ENCODE measurements at regions of chr20 and their contacts with region 1.

Region 1: GRCh38 chr20:48745326-48745725 is 82.5 kb downstream of the PREX1 start:
- DNase-seq: no peak
- H3K4me3 ChIP-seq: no peak overlapping the region
- H3K27ac ChIP-seq: peak overlapping the region in 55 of 59 donors; percentile 12 to 100 (median 82)
- H3K27me3 ChIP-seq: no peaks in the 10 kb centered on the region
- CTCF ChIP-seq: peak in 10 of 56 donors; percentile 16 to 42 (median 23)

Region 2: DNA sequence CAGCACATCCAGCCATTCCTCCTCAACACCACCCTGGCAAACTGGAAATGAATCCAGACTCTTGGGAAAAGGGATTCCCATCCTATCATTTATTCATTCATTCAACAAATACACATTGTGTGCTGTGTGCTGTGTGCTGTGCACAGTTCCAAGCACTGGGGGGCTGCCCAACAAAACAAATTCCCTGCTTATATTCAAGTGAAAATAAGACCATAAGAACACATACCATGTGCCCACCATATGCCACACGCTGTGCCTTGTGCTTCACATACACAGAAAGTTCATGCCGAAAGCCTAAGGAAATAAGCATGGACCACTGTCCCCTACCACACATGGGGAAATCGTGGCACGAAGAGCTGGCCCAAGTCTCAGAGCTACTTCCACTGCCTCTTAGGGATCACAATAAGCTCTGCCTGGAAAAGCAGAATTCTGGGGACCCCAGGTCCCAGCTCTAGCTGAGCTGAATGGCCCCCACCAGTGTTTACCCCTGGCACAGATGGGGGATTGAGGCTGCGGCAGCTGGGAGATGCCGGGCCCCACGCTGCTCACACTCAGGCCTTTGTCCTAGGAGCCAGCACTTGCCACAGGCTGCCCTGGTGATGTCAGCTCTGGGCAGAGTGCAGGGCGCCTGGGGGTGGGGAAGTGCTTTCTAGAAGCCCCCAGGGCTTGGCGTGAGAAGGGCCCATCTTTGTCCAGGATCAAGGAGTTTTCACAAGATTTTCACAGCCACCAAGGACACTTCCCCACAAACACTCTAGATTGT is 17.1 kb before region 1 on chr20:
- intact Hi-C with region 1: loop called in 1 of 2 experiments (anchors 2 kb)
- DNase-seq: peak; percentile 34 to 96 (median 94)
- H3K4me3 ChIP-seq: peak overlapping the region in 4 of 59 donors; percentile 3 to 26 (median 18)
- H3K27ac ChIP-seq: peak overlapping the region; percentile 80 to 100 (median 98)
- H3K27me3 ChIP-seq: no peaks in the 10 kb centered on the region
- CTCF ChIP-seq: peak in 12 of 56 donors; percentile 4 to 34 (median 12)

Region 3: DNA sequence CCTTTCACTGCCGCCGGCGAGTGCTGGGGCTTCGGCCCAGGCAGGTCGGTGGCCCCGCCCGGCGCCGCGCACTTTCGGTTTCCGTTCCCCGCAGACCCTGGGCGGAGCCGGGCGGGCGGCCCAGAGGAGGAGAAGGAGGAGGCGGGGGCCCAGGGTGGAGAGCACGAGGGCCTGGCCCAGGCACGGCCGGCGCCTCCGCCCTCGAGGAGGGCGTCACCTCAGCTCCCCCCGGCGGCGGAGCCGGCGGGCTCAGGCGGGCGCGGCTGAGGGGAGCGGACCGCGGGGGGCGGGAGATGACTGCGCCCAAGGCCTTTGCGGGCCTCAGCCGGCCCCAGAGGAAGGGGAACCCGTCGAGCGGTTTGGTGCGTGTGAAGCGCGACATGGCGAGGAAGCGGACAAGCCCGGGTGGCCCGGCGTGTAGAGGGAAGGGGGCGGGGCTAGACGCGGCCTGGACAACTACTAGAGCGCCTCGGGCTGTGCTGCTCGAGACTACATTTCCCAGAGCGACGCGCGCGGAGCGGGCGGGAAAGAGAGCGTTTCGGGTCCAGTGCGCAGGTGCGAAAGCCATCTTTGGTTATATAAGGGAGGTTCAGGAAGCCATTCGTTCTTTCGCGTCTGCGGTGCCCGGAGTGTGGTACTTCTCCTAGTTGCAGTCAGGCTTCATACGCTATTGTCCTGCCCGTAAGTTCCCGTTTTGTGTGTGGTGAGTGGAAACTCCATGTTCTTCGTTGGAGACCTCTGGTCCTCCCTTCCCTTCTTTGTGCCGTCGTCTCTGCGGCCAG is 532.9 kb after region 1 on chr20 and contains the start of gene ZNFX1:
- intact Hi-C with region 1: no loop called
- DNase-seq: peak; percentile 97 to 99 (median 98)
- H3K4me3 ChIP-seq: peak within 1 kb of the TSS; percentile 56 to 100 (median 90)
- H3K27ac ChIP-seq: peak within 1 kb of the TSS; percentile 71 to 100 (median 98)
- H3K27me3 ChIP-seq: no peaks in the 10 kb centered on the region
- CTCF ChIP-seq: peak in 45 of 56 donors; percentile 1 to 57 (median 30)
- total RNA-seq, gene ZNFX1: 21.0 to 37.9 (median 26.1) TPM

Measured in dorsolateral prefrontal cortex (tissue), 120 donors.